Stomach (tissue), 19 donors: ENCODE measurements at regions of chr16 and their contacts with region 1.

Region 1: GRCh38 chr16:83967806-83968305 is at the start of gene NECAB2:
- DNase-seq: peak; percentile 43 to 72
- H3K4me3 ChIP-seq: peak within 1 kb of the TSS; percentile 31 to 42 (median 40)
- H3K27ac ChIP-seq: no peak within 1 kb of the TSS
- H3K4me1 ChIP-seq: peaks cover 0 to 12% (median 8%) of the 10 kb centered on the region in 4 donors
- H3K27me3 ChIP-seq: peaks cover 0 to 29% (median 20%) of the 10 kb centered on the region in 3 donors
- CTCF ChIP-seq: peak in 3 of 7 experiments; percentile 34 to 67 (median 60)
- EP300 ChIP-seq: no peak
- POLR2A ChIP-seq: no peak
- total RNA-seq, gene NECAB2: 1.7 to 11.2 TPM in 2 of 5 donors, not detected in the others

Region 2: GRCh38 chr16:84044118-84044488 is 76.2 kb after region 1 on chr16:
- intact Hi-C with region 1: loop called (anchors 10 kb)
- DNase-seq: peak in 1 of 2 donors; percentile 40
- H3K4me3 ChIP-seq: no peak overlapping the region
- H3K27ac ChIP-seq: no peak overlapping the region
- H3K4me1 ChIP-seq: peaks cover 0 to 18% (median 9%) of the 10 kb centered on the region in 4 donors
- H3K27me3 ChIP-seq: peaks cover 0 to 56% (median 12%) of the 10 kb centered on the region in 3 donors
- CTCF ChIP-seq: no peak
- EP300 ChIP-seq: no peak
- POLR2A ChIP-seq: no peak

Region 3: GRCh38 chr16:84062734-84063640 is 95.1 kb after region 1 on chr16:
- intact Hi-C with region 1: loop called (anchors 5 kb)
- DNase-seq: peak; percentile 76 to 87
- H3K4me3 ChIP-seq: no peak overlapping the region
- H3K27ac ChIP-seq: no peak overlapping the region
- H3K4me1 ChIP-seq: no peaks in the 10 kb centered on the region
- H3K27me3 ChIP-seq: no peaks in the 10 kb centered on the region
- CTCF ChIP-seq: peak in 5 of 7 experiments; percentile 58 to 88 (median 75)
- EP300 ChIP-seq: no peak
- POLR2A ChIP-seq: no peak

Region 4: GRCh38 chr16:84194470-84195200 is 226.8 kb after region 1 on chr16:
- intact Hi-C with region 1: loop called (anchors 10 kb)
- DNase-seq: no peak
- H3K4me3 ChIP-seq: no peak overlapping the region
- H3K27ac ChIP-seq: no peak overlapping the region
- H3K4me1 ChIP-seq: no peaks in the 10 kb centered on the region
- H3K27me3 ChIP-seq: peaks cover 0 to 30% (median 10%) of the 10 kb centered on the region in 3 donors
- CTCF ChIP-seq: no peak
- EP300 ChIP-seq: no peak
- POLR2A ChIP-seq: no peak